ENCODE measurements at regions of chr17 and their contacts with region 1.

Region 1: DNA sequence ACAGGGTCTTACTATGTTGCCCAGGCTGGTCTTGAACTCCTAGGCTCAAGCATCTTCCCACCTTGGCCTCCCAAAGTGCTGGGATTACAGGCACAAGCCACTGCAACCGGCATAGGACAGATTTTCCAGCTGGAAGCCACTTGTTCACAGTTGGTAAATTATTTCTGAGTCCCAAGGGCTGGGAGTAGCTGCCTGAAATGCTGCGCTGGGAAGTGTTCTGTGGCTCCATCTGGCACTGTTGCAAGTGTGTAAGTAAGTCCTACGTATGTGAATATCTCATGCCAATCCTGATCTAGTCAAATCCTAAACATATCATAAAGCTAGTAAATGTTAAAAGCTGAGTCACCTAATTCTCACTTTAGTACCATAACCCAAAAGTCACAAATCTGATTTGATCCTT is 48.1 kb downstream of the YWHAE start:
- DNase-seq: no peak
- H3K4me3 ChIP-seq: no peak overlapping the region
- H3K27ac ChIP-seq: no peak overlapping the region
- H3K4me1 ChIP-seq: peaks cover 4% of the 10 kb centered on the region
- H3K27me3 ChIP-seq: no peaks in the 10 kb centered on the region
- CTCF ChIP-seq: no peak
- POLR2A ChIP-seq: no peak

Region 2: DNA sequence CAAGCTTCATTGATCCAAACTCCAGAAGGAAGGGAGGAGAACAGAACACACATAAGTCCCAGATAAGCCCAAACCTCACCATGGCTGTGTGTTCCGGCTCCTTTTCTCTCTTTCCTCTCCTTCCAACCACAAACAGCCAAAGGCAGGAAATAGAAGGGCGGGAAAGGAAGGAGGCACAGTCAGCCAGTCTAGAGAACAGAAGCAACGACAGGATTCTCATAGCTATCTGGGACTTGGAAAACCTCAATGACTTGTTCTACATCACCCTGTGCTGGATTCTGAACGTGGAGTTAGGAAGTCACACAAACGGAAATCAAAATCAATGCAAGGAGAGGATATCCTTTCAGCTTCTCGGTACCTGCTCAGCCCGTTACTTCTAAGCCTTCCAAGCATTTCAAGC is 95.1 kb after region 1 on chr17:
- intact Hi-C with region 1: no loop called
- DNase-seq: no peak
- H3K4me3 ChIP-seq: no peak overlapping the region
- H3K27ac ChIP-seq: no peak overlapping the region
- H3K4me1 ChIP-seq: peaks cover 5% of the 10 kb centered on the region
- H3K27me3 ChIP-seq: no peaks in the 10 kb centered on the region
- CTCF ChIP-seq: no peak
- POLR2A ChIP-seq: no peak

Region 3: GRCh38 chr17:1516388-1517161 is 164.6 kb after region 1 on chr17 and contains the start of gene INPP5K:
- intact Hi-C with region 1: loop called (anchors 10 kb)
- DNase-seq: peak; percentile 99
- H3K4me3 ChIP-seq: peak within 1 kb of the TSS; percentile 87
- H3K27ac ChIP-seq: peak within 1 kb of the TSS; percentile 74 to 90
- H3K4me1 ChIP-seq: peaks cover 21% of the 10 kb centered on the region
- H3K27me3 ChIP-seq: no peaks in the 10 kb centered on the region
- CTCF ChIP-seq: peak in 1 of 3 experiments; percentile 19
- POLR2A ChIP-seq: no peak
- total RNA-seq, gene INPP5K: 83.4 to 87.8 TPM